ENCODE measurements at regions of chrX and their contacts with region 1.

Region 1: DNA sequence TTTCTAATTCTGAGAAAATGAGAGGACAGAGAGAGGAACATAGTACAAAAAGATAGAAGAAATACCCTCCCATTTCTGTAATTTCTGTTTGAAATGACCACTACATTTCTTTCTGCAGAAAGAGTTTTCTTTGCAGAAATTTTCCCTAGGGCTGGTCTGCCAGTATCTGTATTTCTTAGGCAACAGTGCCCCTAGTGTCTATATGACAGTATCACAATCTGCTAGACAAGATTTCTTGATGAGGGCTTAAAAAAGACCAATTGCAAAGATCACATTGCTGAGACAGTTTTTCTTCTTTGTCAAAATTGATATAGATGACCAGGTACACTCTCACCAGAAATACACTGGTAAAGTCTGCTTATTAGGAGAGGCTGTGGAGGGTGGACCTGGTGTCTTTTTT is 81.0 kb upstream of the ZDHHC15 start:
- DNase-seq: no peak
- ATAC-seq: peak; percentile 69
- H3K4me3 ChIP-seq: no peak overlapping the region
- H3K27ac ChIP-seq: no peak overlapping the region
- H3K4me1 ChIP-seq: no peaks in the 10 kb centered on the region
- H3K27me3 ChIP-seq: no peaks in the 10 kb centered on the region
- CTCF ChIP-seq: peak; percentile 51 to 59 (median 59); a peak in 5 of 6 replicates
- EP300 ChIP-seq: no peak
- POLR2A ChIP-seq: no peak
- RAD21 ChIP-seq: peak; percentile 68

Region 2: GRCh38 chrX:75045369-75045768 is 558.5 kb before region 1 on chrX:
- CTCF ChIA-PET with region 1: no interaction called
- POLR2A ChIA-PET with region 1: no interaction called
- RAD21 ChIA-PET with region 1: no interaction called
- SMC1A ChIA-PET with region 1: no interaction called
- in situ Hi-C with region 1: loop called (anchors 10 kb)
- intact Hi-C with region 1: no loop called
- DNase-seq: no peak
- ATAC-seq: no peak
- H3K4me3 ChIP-seq: no peak overlapping the region
- H3K27ac ChIP-seq: no peak overlapping the region
- H3K4me1 ChIP-seq: no peaks in the 10 kb centered on the region
- H3K27me3 ChIP-seq: no peaks in the 10 kb centered on the region
- CTCF ChIP-seq: no peak
- EP300 ChIP-seq: no peak
- POLR2A ChIP-seq: no peak
- RAD21 ChIP-seq: no peak

Region 3: DNA sequence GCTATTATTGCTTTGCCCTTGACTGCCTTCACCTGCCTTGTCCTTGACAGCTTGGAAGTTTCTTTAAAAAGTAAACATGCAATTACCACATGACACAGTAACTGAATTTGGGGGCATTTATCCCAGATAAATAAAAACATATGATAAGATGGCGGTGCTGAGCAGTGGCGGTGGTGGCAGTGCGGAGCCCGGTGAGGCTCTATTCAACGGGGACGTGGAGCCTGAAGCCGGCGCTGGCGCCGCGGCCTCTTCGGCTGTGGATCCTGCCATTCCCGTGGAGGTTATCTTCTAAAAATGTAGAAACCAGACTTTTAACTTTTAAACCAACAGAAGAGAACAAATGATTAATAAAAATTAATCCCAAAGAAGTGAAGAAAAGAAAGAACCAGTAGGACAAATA is 21.3 kb before region 1 on chrX:
- CTCF ChIA-PET with region 1: no interaction called
- POLR2A ChIA-PET with region 1: no interaction called
- RAD21 ChIA-PET with region 1: no interaction called
- SMC1A ChIA-PET with region 1: no interaction called
- in situ Hi-C with region 1: no loop called
- intact Hi-C with region 1: no loop called
- DNase-seq: no peak
- ATAC-seq: no peak
- H3K4me3 ChIP-seq: no peak overlapping the region
- H3K27ac ChIP-seq: no peak overlapping the region
- H3K4me1 ChIP-seq: no peaks in the 10 kb centered on the region
- H3K27me3 ChIP-seq: no peaks in the 10 kb centered on the region
- CTCF ChIP-seq: no peak
- EP300 ChIP-seq: no peak
- POLR2A ChIP-seq: no peak
- RAD21 ChIP-seq: no peak

Region 4: GRCh38 chrX:75623535-75623934 is 19.7 kb after region 1 on chrX:
- CTCF ChIA-PET with region 1: no interaction called
- POLR2A ChIA-PET with region 1: no interaction called
- RAD21 ChIA-PET with region 1: no interaction called
- SMC1A ChIA-PET with region 1: no interaction called
- in situ Hi-C with region 1: no loop called
- intact Hi-C with region 1: no loop called
- DNase-seq: no peak
- ATAC-seq: no peak
- H3K4me3 ChIP-seq: no peak overlapping the region
- H3K27ac ChIP-seq: no peak overlapping the region
- H3K4me1 ChIP-seq: no peaks in the 10 kb centered on the region
- H3K27me3 ChIP-seq: no peaks in the 10 kb centered on the region
- CTCF ChIP-seq: peak; percentile 0 to 17 (median 14); a peak in 1 of 6 replicates
- EP300 ChIP-seq: no peak
- POLR2A ChIP-seq: no peak
- RAD21 ChIP-seq: 0 out of 2 replicates have a peak, but pooled peaks have one; percentile 18

Measured in GM12878 (cell line).